ENCODE measurements at regions of chrX and their contacts with region 1.

Region 1: DNA sequence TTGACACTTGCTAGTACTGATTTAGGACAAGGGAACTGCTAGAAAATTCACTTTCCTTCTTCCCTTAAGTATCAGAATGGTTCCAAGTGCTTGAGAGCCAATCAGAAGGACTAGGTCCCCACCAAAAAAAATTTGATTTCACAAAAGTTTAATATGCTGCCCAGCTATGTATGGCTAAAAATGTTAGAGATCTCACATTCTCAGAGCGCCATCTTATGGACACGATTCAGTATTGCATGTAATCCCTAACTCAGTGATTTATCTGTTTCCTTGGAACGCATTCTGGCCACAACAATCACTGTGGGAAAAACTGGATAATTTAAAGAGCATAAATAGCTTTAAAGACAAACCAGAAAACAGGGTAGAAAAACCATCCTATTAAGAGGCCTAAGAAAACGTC is 255.1 kb upstream of the GPC4 start:
- DNase-seq: peak; percentile 1
- ATAC-seq: peak; percentile 36; the same call in 1 of the 3 replicates
- H3K4me3 ChIP-seq: no peak overlapping the region
- H3K27ac ChIP-seq: no peak overlapping the region
- H3K4me1 ChIP-seq: no peaks in the 10 kb centered on the region
- H3K27me3 ChIP-seq: no peaks in the 10 kb centered on the region
- CTCF ChIP-seq: peak; percentile 62 to 65 (median 64)
- EP300 ChIP-seq: no peak
- POLR2A ChIP-seq: no peak
- RAD21 ChIP-seq: peak; percentile 75

Region 2: GRCh38 chrX:132968296-132968949 is 702.0 kb before region 1 on chrX:
- CTCF ChIA-PET with region 1: interaction called, 3 read pairs
- POLR2A ChIA-PET with region 1: no interaction called
- RAD21 ChIA-PET with region 1: no interaction called
- SMC1A ChIA-PET with region 1: no interaction called
- in situ Hi-C with region 1: loop called (anchors 10 kb)
- intact Hi-C with region 1: no loop called
- DNase-seq: no peak
- ATAC-seq: no peak
- H3K4me3 ChIP-seq: no peak overlapping the region
- H3K27ac ChIP-seq: no peak overlapping the region
- H3K4me1 ChIP-seq: no peaks in the 10 kb centered on the region
- H3K27me3 ChIP-seq: no peaks in the 10 kb centered on the region
- CTCF ChIP-seq: no peak
- EP300 ChIP-seq: no peak
- POLR2A ChIP-seq: no peak
- RAD21 ChIP-seq: no peak

Region 3: DNA sequence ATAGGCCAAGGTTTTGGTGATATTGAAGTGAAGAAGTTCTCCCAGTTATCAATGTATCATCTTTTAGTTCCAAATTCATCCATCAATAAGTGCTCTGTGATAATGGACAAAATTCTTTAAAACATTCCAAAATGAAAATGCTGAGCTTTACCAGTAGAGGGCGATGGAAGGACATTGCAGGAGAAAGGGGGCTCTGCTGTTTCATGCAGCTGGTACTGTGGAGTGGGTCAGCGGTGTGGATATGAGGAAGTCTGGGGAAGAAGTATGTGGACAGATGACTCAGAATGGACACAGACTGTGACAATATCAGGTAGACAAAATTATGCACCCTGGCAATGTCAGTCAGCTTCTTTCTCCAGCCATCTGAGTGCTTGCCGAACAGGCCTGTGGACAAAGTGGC is 665.3 kb before region 1 on chrX:
- CTCF ChIA-PET with region 1: interaction called, 14 read pairs
- POLR2A ChIA-PET with region 1: no interaction called
- RAD21 ChIA-PET with region 1: interaction called, 5 read pairs
- SMC1A ChIA-PET with region 1: interaction called, 17 read pairs
- in situ Hi-C with region 1: no loop called
- intact Hi-C with region 1: loop called (anchors 10 kb)
- DNase-seq: no peak
- ATAC-seq: no peak
- H3K4me3 ChIP-seq: no peak overlapping the region
- H3K27ac ChIP-seq: no peak overlapping the region
- H3K4me1 ChIP-seq: no peaks in the 10 kb centered on the region
- H3K27me3 ChIP-seq: no peaks in the 10 kb centered on the region
- CTCF ChIP-seq: peak; percentile 49 to 66 (median 58)
- EP300 ChIP-seq: no peak
- POLR2A ChIP-seq: no peak
- RAD21 ChIP-seq: peak; percentile 60

Region 4: GRCh38 chrX:133610056-133610455 is 60.3 kb before region 1 on chrX:
- CTCF ChIA-PET with region 1: no interaction called
- POLR2A ChIA-PET with region 1: no interaction called
- RAD21 ChIA-PET with region 1: no interaction called
- SMC1A ChIA-PET with region 1: no interaction called
- in situ Hi-C with region 1: no loop called
- intact Hi-C with region 1: no loop called
- DNase-seq: no peak
- ATAC-seq: no peak
- H3K4me3 ChIP-seq: no peak overlapping the region
- H3K27ac ChIP-seq: no peak overlapping the region
- H3K4me1 ChIP-seq: no peaks in the 10 kb centered on the region
- H3K27me3 ChIP-seq: no peaks in the 10 kb centered on the region
- CTCF ChIP-seq: no peak
- EP300 ChIP-seq: no peak
- POLR2A ChIP-seq: no peak
- RAD21 ChIP-seq: no peak

Region 5: GRCh38 chrX:133838761-133839676 is 168.6 kb after region 1 on chrX:
- CTCF ChIA-PET with region 1: no interaction called
- POLR2A ChIA-PET with region 1: no interaction called
- RAD21 ChIA-PET with region 1: no interaction called
- SMC1A ChIA-PET with region 1: no interaction called
- in situ Hi-C with region 1: no loop called
- intact Hi-C with region 1: no loop called
- DNase-seq: no peak
- ATAC-seq: peak; percentile 47
- H3K4me3 ChIP-seq: no peak overlapping the region
- H3K27ac ChIP-seq: no peak overlapping the region
- H3K4me1 ChIP-seq: no peaks in the 10 kb centered on the region
- H3K27me3 ChIP-seq: no peaks in the 10 kb centered on the region
- CTCF ChIP-seq: peak; percentile 40 to 65 (median 57); a peak in 5 of 6 replicates
- EP300 ChIP-seq: no peak
- POLR2A ChIP-seq: no peak
- RAD21 ChIP-seq: peak; percentile 41; the same call in 1 of the 2 replicates

Region 6: DNA sequence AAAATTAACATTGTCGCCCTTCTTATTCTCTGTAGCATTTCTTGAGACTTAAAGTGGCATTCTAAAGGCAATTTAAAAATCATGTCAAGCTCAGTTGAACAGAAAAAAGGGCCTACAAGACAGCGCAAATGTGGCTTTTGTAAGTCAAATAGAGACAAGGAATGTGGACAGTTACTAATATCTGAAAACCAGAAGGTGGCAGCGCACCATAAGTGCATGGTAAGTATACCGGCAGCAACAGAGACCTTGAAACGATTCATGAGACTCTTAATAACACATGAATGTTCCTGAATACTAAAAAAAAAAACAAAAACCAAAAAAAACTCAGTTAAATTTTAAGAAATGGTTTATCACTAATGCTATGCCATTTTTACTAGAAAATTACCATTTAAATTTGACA is 707.2 kb after region 1 on chrX:
- CTCF ChIA-PET with region 1: no interaction called
- POLR2A ChIA-PET with region 1: no interaction called
- RAD21 ChIA-PET with region 1: no interaction called
- SMC1A ChIA-PET with region 1: no interaction called
- in situ Hi-C with region 1: no loop called
- intact Hi-C with region 1: no loop called
- DNase-seq: no peak
- ATAC-seq: peak; percentile 55
- H3K4me3 ChIP-seq: no peak overlapping the region
- H3K27ac ChIP-seq: no peak overlapping the region
- H3K4me1 ChIP-seq: no peaks in the 10 kb centered on the region
- H3K27me3 ChIP-seq: no peaks in the 10 kb centered on the region
- CTCF ChIP-seq: peak; percentile 15 to 48 (median 33); a peak in 4 of 6 replicates
- EP300 ChIP-seq: no peak
- POLR2A ChIP-seq: no peak
- RAD21 ChIP-seq: peak; percentile 51

Measured in GM12878 (cell line).